Activated CD4-positive, alpha-beta memory T cell treated with anti-CD3 and anti-CD28 coated beads for 36 hours (primary cell): ENCODE measurements at regions of chr11 and their contacts with region 1.

Region 1: DNA sequence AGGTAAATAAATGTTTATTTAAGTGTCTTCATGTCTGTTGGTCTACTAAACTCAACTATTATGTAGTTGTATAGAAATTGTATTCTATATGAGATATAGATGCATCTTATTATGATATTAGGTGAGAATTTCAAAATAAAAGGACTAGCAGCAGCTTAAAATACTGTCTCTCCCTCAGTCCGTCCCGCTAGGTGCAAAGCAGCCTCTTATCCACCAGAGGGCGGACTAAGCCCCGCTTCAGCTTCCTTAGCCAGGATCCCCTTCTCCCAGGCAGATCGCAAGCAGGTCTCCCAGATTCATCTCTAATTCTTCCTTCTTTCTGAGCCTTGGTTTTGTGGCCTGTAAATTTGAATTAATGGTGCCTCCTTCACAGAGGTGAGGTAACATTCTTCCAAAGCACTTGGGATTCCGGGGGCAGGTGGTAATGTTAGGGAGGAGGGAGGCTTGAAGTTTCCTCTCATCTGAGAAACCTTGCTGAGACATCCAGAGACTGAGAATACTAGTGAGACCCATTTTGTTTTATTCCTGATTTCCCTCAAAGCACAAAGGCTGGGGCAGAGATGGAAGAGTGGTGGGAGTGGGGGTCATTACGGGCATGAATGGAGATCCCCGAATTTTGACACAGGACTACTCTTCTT is 13.5 kb upstream of the INSC start:
- DNase-seq: peak; percentile 66
- H3K4me3 Mint-ChIP-seq: no peak overlapping the region
- H3K27ac Mint-ChIP-seq: no peak overlapping the region
- H3K4me1 Mint-ChIP-seq: no peaks in the 10 kb centered on the region
- H3K27me3 Mint-ChIP-seq: peaks cover 14% of the 10 kb centered on the region

Region 2: DNA sequence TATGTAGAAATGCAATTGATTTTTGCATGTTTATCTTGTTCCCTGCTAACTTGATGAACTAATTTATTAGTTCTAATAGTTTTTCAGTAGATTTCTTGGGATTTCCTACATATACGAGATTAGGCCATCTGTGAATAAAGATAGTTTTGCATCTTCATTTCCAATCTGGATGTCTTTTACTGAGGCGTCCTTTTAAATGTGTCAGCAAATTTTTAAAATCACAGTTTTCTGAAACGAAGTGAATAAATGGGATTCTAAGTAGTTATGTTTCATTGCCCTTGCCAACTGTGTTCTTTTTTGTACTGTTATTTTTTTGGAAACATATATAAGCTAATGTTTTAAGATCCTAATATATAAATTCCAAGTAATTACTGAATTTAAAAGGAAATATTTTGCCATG is 259.2 kb before region 1 on chr11:
- CTCF ChIA-PET with region 1: no interaction called
- POLR2A ChIA-PET with region 1: no interaction called
- intact Hi-C with region 1: no loop called
- DNase-seq: no peak
- H3K4me3 Mint-ChIP-seq: no peak overlapping the region
- H3K27ac Mint-ChIP-seq: no peak overlapping the region
- H3K4me1 Mint-ChIP-seq: no peaks in the 10 kb centered on the region
- H3K27me3 Mint-ChIP-seq: no peaks in the 10 kb centered on the region

Region 3: GRCh38 chr11:15112131-15112541 is 10.9 kb after region 1 on chr11:
- CTCF ChIA-PET with region 1: interaction called, 16 read pairs
- POLR2A ChIA-PET with region 1: no interaction called
- intact Hi-C with region 1: no loop called
- DNase-seq: no peak
- H3K4me3 Mint-ChIP-seq: no peak overlapping the region
- H3K27ac Mint-ChIP-seq: no peak overlapping the region
- H3K4me1 Mint-ChIP-seq: peaks cover 10% of the 10 kb centered on the region
- H3K27me3 Mint-ChIP-seq: peaks cover 22% of the 10 kb centered on the region

Region 4: DNA sequence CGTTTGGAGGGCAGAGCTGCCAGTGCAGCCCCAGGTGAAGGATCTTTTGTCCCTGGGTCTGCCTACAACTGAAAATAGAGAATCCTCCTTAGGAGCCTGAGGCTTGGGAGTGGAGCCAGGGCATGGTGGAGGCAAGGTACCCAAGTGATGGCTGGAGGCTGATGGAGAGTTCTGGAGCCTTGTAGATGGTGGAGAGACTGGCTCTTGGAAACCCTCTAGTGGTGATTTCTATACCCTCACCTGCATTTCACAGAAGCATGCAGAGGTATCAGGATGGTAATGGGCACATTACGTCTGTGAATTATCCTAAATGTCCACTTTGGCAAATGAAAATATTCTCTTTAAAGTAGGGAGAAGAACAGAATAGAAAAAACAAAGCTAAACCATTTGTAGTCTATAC is 57.9 kb after region 1 on chr11:
- CTCF ChIA-PET with region 1: interaction called, 6 read pairs
- POLR2A ChIA-PET with region 1: no interaction called
- intact Hi-C with region 1: loop called (anchors 2 kb)
- DNase-seq: no peak
- H3K4me3 Mint-ChIP-seq: no peak overlapping the region
- H3K27ac Mint-ChIP-seq: no peak overlapping the region
- H3K4me1 Mint-ChIP-seq: no peaks in the 10 kb centered on the region
- H3K27me3 Mint-ChIP-seq: peaks cover 5% of the 10 kb centered on the region

Region 5: DNA sequence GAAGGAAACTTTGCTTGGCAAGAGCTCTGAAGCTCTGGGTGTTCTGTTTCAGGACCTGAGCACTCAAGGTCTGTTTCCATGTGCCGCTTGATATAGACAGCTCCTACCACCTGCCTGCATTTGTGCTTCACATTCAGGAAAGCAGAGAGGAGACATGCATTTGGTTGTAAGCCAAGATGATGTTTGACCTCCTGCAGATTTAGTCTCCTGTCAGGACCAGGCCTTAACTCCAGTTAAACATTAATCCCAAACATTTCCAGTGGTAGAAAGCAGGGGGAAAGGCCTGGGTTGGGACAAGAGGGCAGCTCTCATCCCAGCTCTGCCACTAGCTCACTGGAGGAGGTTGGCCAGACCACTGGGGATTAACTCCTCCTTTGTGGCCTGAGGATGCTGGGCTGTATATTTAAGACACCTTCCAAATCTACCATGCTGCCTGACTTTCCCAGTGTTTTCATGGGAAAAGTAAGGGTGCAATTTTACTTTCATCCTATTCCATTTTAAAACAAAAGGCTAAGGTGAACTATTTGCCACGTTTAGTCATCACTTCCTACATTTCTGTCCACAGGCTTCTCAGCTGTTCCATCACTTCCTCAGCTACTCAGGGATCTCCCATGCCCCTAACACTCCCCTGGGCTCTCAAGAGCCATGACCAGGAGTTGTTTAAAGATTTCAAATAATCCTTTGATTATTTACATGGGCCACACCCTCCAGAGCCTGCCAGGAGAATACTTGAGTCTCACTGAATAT is 94.4 kb after region 1 on chr11:
- CTCF ChIA-PET with region 1: interaction called, 11 read pairs
- POLR2A ChIA-PET with region 1: no interaction called
- intact Hi-C with region 1: no loop called
- DNase-seq: no peak
- H3K4me3 Mint-ChIP-seq: no peak overlapping the region
- H3K27ac Mint-ChIP-seq: no peak overlapping the region
- H3K4me1 Mint-ChIP-seq: no peaks in the 10 kb centered on the region
- H3K27me3 Mint-ChIP-seq: no peaks in the 10 kb centered on the region

Region 6: GRCh38 chr11:15208378-15209222 is 107.4 kb after region 1 on chr11:
- CTCF ChIA-PET with region 1: interaction called, 86 read pairs
- POLR2A ChIA-PET with region 1: no interaction called
- intact Hi-C with region 1: loop called (anchors 1 kb)
- DNase-seq: peak; percentile 79
- H3K4me3 Mint-ChIP-seq: no peak overlapping the region
- H3K27ac Mint-ChIP-seq: no peak overlapping the region
- H3K4me1 Mint-ChIP-seq: no peaks in the 10 kb centered on the region
- H3K27me3 Mint-ChIP-seq: peaks cover 2% of the 10 kb centered on the region